ENCODE measurements at regions of chr19 and their contacts with region 1.

Region 1: DNA sequence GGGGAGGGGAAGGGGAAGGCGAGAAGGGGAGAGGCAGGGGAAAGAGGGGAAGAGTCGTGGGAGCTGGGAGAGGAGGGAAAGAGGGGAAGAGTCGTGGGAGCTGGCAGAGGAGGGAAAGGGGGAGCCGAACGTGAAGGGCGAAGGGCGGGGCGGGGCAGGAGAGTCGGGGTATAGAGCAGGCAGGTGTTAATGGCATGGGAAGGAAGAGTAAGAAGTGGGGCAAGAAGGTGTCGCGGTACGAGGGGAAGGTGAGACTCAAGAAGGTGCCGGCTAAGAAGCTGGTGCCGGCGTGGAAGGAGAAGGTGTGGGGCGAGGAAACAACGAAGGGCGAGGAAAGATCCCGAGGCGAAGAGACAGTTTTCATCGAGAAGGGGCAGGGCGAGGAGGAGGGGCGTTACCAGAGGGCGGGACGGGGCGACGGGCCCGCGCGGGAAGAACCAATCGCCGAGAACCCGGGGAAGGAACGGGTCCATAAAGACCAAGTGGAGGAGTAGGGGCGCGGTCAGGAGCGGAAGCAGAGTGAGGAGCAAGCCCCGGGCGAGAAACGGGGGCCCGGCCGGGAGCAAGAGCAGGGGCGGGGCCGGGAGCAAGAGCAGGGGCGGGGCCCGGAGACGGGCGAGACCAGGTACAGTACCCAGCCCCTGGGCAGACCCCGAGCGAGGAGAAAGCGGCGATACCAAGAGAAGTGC is 463 bp downstream of the CATSPERG start:
- DNase-seq: peak; percentile 88 to 99 (median 96)

Region 2: DNA sequence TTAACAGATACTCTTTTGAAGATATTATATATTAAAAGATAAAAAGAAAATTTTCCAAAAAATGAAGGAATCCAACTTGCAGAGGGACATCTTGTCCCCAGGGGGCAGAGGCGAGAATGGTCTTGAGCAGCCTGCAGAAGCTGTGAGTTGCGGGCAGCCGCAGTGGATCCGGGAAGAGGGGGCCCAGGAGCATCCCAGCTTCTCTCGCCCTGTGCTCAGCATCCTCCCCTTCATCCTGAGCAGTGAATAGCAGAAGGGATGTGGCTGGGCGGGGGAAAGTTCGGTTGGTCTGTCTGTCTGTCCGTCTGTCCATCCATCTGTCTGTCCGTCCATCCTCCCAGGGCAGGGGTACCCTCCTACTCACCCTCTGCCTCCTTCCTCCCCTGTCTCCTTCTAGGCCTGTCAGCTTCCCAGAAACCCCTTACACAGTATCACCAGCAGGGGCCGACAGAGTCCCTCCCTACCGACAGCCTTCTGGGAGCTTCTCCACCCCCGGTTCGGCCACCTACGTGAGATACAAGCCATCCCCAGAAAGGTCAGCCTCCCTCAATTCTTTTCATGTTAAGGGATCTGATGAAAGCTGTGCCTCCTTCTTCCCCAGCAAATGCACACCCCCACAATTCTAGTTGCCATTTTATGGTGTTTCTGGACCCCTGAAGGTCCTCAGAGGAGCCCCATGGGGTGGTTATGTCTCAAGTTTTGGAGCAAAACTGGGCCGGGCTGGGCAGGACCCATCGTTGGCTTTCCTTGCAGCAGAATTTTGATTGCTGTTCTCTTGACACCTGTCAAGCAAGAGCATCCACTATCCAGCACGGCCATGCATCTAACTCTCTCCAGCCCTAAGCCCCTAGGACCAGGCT is 193.7 kb before region 1 on chr19:
- intact Hi-C with region 1: loop called (anchors 10 kb)
- DNase-seq: peak; percentile 68 to 95 (median 85)

Region 3: DNA sequence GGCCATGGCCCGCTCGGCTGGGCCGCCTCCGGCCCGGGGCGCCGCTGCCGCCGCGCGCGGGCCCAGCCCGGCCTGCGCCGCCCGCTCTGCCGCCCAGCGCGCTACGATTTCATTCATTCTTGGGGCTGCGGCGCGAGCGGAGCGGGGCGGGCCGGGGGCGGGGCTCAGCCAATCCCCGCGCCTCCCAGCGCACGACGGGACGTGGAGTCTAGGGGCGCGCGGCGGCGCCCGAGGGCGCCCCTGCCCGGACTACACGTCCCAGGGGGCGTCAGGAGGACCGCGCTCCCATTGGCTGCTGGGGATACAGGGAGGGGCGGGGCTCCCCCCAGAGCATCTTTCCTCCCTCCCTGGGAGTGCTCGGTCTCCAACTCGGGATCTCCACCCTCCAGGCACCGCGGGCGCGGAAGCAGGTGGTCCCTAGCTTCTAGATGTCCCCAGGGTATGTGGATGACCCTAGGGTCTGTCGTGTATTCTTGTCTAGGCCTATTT is 106.5 kb before region 1 on chr19:
- intact Hi-C with region 1: loop called (anchors 5 kb)
- DNase-seq: peak; percentile 88 to 99 (median 96)

Region 4: DNA sequence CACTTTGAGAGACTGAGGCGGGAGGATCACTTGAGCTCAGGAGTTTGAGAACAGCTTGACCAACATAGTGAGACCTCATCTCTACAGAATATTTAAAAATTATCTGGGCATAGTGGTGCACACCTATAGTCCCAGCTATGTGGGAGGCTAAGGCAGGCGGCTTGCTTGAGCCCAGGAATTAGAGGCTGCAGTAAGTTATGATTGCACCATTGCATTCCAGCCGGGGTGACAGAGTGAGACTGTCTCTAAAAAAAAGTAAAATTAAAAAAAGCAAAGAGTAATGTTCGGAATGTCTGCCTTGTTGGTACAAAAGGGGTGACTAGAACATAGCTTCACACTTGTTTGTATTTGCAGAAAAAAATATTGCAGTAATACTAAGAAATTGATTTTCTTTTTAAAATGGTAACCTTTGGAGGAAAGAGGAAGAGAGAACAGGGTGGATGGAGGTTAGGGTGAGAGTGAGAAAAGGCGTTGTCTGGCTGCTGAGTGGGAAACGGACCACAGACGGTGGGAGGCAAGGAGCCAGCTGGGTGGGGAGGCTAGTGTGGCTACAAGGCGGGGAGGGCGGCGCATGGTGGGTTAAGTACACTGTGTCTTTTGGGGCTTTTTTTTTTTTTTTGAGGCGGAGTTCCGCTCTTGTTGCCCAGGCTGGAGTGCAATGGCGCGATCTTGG is 90.1 kb before region 1 on chr19:
- intact Hi-C with region 1: loop called (anchors 5 kb)
- DNase-seq: peak in 3 of 42 donors; percentile 36 to 70 (median 56)

Region 5: DNA sequence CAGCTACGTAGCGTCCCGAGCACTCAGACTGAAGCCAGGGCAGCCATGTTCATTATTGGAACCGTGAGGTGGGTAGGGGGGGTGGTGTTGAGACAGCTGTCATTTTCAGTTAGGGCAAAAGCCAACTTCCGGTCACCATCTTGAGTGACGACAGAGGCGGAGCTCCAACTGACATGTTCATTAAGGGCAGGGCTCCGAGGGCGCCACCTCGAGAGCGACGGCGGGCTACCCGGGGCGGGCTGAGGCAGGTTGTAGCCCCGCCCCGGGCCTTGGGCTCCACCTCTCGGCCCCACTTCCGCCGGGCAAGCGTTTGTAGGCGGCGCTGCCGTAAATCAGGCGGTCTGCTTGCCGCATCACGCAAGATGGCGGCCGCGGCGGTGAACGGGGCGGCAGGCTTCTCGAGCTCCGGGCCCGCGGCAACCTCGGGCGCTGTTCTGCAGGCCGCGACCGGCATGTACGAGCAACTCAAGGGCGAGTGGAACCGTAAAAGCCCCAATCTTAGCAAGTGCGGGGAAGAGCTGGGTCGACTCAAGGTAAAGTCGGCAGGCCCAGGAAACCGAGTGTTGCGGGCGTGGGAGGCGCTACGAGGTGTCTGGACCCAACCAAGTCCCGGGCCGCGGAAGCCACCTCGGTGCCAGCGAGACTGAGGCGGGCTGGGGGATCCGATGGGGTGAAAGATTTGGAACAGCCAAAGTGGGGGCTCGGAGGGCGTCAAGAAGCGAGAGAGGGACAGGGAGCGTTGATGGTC is 38.5 kb after region 1 on chr19 and contains the start of gene PSMD8:
- intact Hi-C with region 1: loop called (anchors 1 kb)
- DNase-seq: peak; percentile 99 to 100 (median 100)

Region 6: GRCh38 chr19:38452428-38453366 is 116.6 kb after region 1 on chr19:
- intact Hi-C with region 1: no loop called
- DNase-seq: no peak

Measured in head of caudate nucleus (tissue), 42 donors.